Mammary epithelial cell (primary cell): ENCODE measurements at regions of chr16 and their contacts with region 1.

Region 1: GRCh38 chr16:57084257-57084770 is 8.1 kb upstream of the CPNE2 start:
- DNase-seq: peak; percentile 36
- H3K4me3 ChIP-seq: no peak overlapping the region
- H3K27ac ChIP-seq: no peak overlapping the region
- H3K4me1 ChIP-seq: no peaks in the 10 kb centered on the region
- H3K27me3 ChIP-seq: no peaks in the 10 kb centered on the region
- CTCF ChIP-seq: peak; percentile 97 to 99

Region 2: DNA sequence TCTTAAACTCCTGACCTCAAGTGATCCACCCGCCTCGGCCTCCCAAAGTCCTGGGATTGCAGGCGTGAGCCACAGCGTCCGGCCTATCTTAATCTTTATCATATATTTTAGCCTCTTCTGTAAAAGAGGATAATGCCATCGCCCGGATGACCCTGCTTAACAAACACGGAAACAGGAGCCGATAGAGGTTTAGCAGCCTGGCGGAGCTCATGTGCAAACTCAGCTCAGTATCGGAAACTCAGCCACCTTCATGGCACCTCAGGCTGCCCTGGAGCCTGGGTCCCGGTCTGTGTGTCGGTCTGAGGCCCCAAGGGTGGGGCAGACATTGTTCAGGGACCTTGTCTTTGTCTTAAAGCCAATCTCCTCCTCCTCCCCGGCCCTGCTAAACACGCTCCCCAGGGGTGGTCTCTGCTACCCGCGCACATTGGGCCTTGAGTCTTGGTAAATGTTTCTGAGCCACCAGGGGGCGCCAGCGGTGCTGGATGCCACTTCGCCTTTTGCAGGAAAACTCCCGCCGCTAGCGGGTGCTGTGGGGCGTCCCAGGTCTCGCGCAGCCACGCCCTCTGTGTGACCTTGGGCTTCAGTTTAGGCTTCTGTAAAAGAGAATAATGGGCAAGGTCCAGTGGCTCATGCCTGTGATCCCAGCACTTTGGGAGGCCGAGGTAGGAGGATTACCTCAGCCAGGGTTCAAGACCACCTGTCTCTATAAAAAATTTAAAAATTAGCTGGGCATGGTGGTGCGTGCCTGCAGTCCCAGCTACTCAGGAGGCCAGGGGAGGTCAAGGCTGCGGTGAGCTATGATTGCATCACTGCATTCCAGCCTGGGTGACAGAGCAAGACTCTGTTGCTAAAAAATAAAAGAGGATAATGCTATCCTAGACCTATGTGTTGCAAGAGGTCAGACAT is 119.8 kb before region 1 on chr16:
- CTCF ChIA-PET with region 1: no interaction called
- dilution Hi-C with region 1: no loop called
- in situ Hi-C with region 1: no loop called
- intact Hi-C with region 1: loop called (anchors 1 kb)
- DNase-seq: peak; percentile 60
- H3K4me3 ChIP-seq: no peak overlapping the region
- H3K27ac ChIP-seq: no peak overlapping the region
- H3K4me1 ChIP-seq: peaks cover 3% of the 10 kb centered on the region
- H3K27me3 ChIP-seq: no peaks in the 10 kb centered on the region
- CTCF ChIP-seq: peak; percentile 76 to 77

Region 3: GRCh38 chr16:56988948-56989945 is 95.1 kb before region 1 on chr16 and contains the start of gene NLRC5:
- CTCF ChIA-PET with region 1: no interaction called
- dilution Hi-C with region 1: no loop called
- in situ Hi-C with region 1: no loop called
- intact Hi-C with region 1: loop called (anchors 5 kb)
- DNase-seq: peak; percentile 79
- H3K4me3 ChIP-seq: peak within 1 kb of the TSS; percentile 72 to 88 (median 75)
- H3K27ac ChIP-seq: peak within 1 kb of the TSS; percentile 21
- H3K4me1 ChIP-seq: peaks cover 27% of the 10 kb centered on the region
- H3K27me3 ChIP-seq: no peaks in the 10 kb centered on the region
- CTCF ChIP-seq: no peak
- total RNA-seq, gene NLRC5: 2.7 to 10.2 TPM

Region 4: GRCh38 chr16:57071831-57072582 is 12.3 kb before region 1 on chr16:
- CTCF ChIA-PET with region 1: no interaction called
- dilution Hi-C with region 1: no loop called
- in situ Hi-C with region 1: no loop called
- intact Hi-C with region 1: no loop called
- DNase-seq: peak; percentile 83
- H3K4me3 ChIP-seq: no peak overlapping the region
- H3K27ac ChIP-seq: no peak overlapping the region
- H3K4me1 ChIP-seq: peaks cover 10% of the 10 kb centered on the region
- H3K27me3 ChIP-seq: no peaks in the 10 kb centered on the region
- CTCF ChIP-seq: no peak

Region 5: DNA sequence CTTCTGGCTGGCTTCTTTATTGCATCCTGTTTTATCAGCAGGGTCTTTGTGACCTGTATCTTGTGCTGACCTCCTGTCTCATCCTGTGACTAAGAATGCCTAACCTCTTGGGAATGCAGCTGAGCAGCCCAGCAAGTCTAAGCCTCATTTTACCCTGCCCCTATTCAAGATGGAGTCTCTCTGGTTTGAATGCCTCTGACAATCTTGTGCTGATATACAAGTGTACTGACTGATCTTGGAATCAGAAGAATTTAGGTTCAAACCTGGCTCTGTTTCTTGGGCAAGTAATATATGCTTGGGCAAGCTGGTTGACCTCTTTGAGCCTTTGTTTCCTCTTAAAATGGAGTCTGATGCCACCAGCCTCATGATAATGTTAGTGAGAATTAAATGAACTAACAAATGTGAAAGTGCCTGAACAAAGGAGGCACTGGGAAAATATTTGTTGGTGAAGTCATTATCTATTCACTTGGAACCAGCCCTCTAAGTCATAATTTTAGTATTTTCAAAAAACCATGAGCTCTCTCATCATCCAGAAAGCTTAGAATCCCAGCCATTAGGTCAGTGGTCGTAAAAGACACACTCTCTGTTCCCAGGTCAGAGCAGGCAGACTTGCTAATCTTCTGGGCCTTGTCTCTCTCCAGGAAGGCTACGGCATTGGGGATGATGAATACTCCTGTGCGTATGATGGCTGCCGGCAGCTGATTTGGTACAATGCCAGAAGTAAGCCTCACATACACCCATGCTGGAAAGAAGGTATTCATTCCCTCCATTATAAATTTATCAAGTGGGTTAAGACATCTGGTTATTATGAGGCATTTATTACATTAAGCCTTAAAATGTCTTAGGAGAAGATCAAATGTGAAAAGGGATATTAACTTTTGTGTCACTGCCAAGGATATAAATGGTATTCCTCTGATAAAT is 142.6 kb after region 1 on chr16:
- CTCF ChIA-PET with region 1: no interaction called
- dilution Hi-C with region 1: no loop called
- in situ Hi-C with region 1: no loop called
- intact Hi-C with region 1: no loop called
- DNase-seq: no peak
- H3K4me3 ChIP-seq: no peak overlapping the region
- H3K27ac ChIP-seq: peak overlapping the region; percentile 19
- H3K4me1 ChIP-seq: peaks cover 7% of the 10 kb centered on the region
- H3K27me3 ChIP-seq: no peaks in the 10 kb centered on the region
- CTCF ChIP-seq: no peak

Region 6: GRCh38 chr16:57244767-57245471 is 160.6 kb after region 1 on chr16 and contains the start of gene ARL2BP:
- CTCF ChIA-PET with region 1: no interaction called
- dilution Hi-C with region 1: no loop called
- in situ Hi-C with region 1: no loop called
- intact Hi-C with region 1: loop called (anchors 2 kb)
- DNase-seq: peak; percentile 98
- H3K4me3 ChIP-seq: peak within 1 kb of the TSS; percentile 73 to 77 (median 76)
- H3K27ac ChIP-seq: peak within 1 kb of the TSS; percentile 73
- H3K4me1 ChIP-seq: peaks cover 11% of the 10 kb centered on the region
- H3K27me3 ChIP-seq: no peaks in the 10 kb centered on the region
- CTCF ChIP-seq: peak in 1 of 2 donors; percentile 14
- total RNA-seq, gene ARL2BP: 70.2 to 82.4 TPM

Region 7: DNA sequence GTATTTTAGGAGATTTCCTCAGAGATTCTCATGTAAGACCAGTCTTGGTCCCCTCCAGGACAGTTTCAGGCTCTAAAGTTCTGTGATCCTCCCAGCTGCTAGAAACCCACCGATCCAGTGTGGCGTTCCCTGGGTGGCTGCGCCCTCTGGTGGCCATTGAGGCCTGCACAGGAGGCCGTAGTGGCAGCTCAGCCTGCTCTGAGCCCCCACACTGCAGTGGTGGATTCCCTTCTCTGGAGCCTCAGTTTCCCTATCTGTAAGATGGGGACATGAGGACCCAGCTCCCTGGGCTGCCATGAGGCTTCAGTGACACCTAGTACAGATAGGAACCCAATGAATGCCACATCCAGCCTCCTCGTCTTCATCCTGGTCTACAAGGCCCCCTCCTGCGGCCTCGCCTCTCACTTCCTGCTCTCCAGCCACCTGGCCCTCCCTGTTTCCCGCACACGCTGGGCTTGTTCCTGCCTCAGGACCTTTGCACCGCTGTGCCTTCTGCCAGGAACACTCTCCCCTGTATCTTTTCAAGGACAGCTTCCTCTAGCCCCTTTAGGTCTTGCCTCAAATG is 435.6 kb after region 1 on chr16:
- CTCF ChIA-PET with region 1: no interaction called
- dilution Hi-C with region 1: no loop called
- in situ Hi-C with region 1: no loop called
- intact Hi-C with region 1: loop called (anchors 5 kb)
- DNase-seq: peak; percentile 20
- H3K4me3 ChIP-seq: no peak overlapping the region
- H3K27ac ChIP-seq: no peak overlapping the region
- H3K4me1 ChIP-seq: no peaks in the 10 kb centered on the region
- H3K27me3 ChIP-seq: no peaks in the 10 kb centered on the region
- CTCF ChIP-seq: peak; percentile 93 to 98